Ascending aorta (tissue), 2 donors: ENCODE measurements at regions of chr2 and their contacts with region 1.

Region 1: GRCh38 chr2:238160206-238161109 is 1.7 kb downstream of the ERFE start:
- DNase-seq: peak in 1 of 2 donors; percentile 60
- H3K4me3 ChIP-seq: no peak overlapping the region
- H3K27ac ChIP-seq: no peak overlapping the region
- H3K4me1 ChIP-seq: peaks cover 7 to 8% of the 10 kb centered on the region in 2 donors
- H3K27me3 ChIP-seq: peaks cover 4% of the 10 kb centered on the region
- CTCF ChIP-seq: peak in 1 of 3 experiments; percentile 19

Region 2: DNA sequence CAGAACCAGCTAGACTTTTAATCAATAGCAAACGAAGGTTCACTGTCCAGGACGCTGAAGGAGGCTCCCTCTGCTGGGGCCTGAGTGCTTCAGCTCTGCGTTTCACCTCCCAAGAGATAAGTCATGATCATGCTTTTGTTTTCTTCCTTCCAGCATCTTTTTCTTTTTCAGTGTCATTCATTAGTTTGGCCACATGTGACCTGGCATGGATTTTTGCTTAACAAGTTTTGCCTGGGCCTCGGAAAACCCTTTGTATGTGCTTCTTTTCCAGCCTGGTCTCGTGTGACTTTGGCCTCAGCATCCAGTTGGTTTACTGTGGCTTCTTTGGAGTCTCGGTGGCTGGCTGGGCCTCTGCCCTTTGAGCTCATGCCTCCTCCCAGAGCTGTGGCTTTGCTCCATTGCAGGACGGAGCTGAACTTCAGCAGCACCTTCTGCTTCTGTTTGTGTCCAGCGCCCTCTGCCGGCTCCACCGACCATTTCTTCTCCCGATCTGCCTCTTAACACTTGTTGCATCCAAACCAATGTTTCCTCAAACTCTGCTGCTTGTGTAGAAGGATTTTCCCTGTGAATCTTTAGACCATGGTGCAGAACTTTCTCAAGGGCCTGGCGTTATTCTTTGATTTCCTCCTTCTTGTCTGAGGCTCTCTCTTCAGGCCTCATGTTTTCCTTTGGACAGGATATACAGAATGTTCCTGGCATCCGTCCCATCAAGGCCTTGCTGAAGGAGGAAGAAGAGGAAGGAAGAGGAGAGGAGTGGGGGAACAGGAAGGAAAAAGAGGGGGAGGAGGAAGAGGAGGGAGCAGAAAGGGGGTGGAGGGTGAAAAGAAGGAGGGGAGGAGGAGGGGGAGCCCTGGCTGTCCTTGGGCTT is 103.0 kb after region 1 on chr2:
- intact Hi-C with region 1: loop called (anchors 5 kb)
- DNase-seq: peak; percentile 63 to 97
- H3K4me3 ChIP-seq: no peak overlapping the region
- H3K27ac ChIP-seq: peak overlapping the region; percentile 37 to 51
- H3K4me1 ChIP-seq: peaks cover 0 to 6% of the 10 kb centered on the region in 2 donors
- H3K27me3 ChIP-seq: no peaks in the 10 kb centered on the region
- CTCF ChIP-seq: peak; percentile 75 to 90 (median 77)